AG04449 (cell line): ENCODE measurements at regions of chr14 and their contacts with region 1.

Region 1: GRCh38 chr14:103679351-103679750 is 35.9 kb downstream of the XRCC3 start:
- DNase-seq: no peak
- H3K4me3 ChIP-seq: no peak overlapping the region
- CTCF ChIP-seq: peak; percentile 49

Region 2: DNA sequence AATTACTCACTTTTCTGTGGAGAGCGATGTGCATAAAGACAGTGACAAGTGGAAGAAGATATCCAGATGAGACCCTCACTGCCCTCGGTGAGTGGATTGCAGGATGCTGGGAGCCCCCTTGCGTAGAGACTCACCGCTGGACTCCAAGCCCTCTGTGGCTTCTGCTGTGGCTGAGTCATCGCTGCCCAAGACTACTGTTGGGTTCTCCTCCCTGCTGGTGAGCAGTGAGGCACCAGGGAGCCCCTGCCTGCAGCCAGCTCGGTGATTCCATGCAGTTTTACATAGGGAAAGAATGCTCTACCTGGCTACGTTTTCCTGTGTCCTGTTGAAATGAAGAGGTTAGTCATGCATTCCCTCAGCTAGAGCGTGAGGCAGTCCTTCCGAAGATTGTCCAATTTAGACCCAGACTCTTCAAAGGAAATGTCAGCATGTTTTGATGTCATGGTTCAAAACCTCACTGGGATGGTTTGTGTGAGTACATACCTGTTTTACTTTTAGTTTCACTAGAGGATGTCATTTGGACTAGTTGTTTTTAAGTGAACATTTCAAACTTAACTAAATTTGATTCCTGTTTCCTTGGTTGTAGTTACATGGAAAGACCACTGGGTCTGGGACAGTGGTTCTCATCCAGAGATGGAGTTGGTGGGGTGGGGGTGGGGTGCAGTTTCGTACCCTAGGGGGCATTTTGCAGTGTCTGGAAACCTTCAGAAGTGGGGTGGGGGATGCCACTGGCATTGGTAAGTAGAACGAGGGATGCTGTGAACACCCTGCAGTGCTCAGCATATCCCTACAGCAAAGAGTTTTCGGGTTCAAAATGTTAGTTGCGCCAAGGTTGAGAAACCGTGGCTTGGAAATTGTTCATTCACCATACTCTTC is 873.7 kb before region 1 on chr14:
- CTCF ChIA-PET with region 1: no interaction called
- POLR2A ChIA-PET with region 1: no interaction called
- DNase-seq: no peak
- H3K4me3 ChIP-seq: no peak overlapping the region
- CTCF ChIP-seq: no peak

Region 3: GRCh38 chr14:103528587-103529382 is 150.6 kb before region 1 on chr14 and contains the start of gene TRMT61A:
- CTCF ChIA-PET with region 1: no interaction called
- POLR2A ChIA-PET with region 1: no interaction called
- DNase-seq: no peak
- H3K4me3 ChIP-seq: peak within 1 kb of the TSS; percentile 93
- CTCF ChIP-seq: no peak

Region 4: GRCh38 chr14:103668117-103668516 is 11.2 kb before region 1 on chr14:
- CTCF ChIA-PET with region 1: interaction called, 13 read pairs
- POLR2A ChIA-PET with region 1: no interaction called
- DNase-seq: no peak
- H3K4me3 ChIP-seq: no peak overlapping the region
- CTCF ChIP-seq: no peak

Region 5: DNA sequence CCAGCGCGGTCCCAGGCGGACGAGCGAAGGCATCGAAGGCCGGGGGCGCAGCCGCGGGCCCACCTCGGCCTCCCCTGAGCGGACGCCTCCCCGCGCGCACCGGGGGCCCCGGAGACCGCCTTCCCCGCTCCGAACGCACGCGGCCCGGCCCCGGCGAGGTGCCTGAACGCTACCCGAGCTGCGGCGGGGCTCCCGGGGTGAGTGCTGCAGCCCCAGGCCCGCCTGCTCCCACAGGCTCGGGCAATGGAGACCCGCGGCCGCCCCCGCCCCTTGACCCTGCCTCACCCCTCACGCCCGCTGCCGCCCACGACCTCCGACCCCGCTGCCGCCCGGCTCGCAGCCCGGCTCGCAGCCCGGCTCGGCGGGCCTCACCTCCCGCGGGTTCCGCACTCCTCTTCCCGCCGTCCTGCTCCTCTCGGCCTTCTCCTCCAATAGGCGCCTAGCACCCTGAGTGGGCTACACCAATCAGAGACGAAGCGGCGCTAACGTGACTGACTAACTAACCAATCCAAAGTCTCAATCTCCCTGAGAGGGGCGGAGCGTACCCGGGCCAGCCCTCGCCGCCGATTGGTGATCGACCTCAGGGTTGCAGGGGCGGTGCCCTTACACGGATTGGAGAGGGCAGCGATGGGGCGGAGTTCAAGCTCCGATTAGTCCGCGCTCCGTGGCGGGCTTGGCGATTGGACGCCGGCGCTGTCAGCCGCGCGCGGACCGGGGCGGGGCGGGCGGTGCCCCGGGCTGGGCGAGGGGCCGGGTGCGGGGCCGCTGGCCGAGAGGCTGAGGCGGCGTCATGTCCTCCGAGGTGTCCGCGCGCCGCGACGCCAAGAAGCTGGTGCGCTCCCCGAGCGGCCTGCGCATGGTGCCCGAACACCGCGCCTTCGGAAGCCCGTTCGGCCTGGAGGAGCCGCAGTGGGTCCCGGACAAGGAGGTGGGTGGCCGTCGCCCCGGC is 36.0 kb after region 1 on chr14 and contains the starts of genes XRCC3 and ZFYVE21:
- CTCF ChIA-PET with region 1: no interaction called
- POLR2A ChIA-PET with region 1: no interaction called
- DNase-seq: peak; percentile 91
- H3K4me3 ChIP-seq: peak within 1 kb of the TSS; percentile 64
- CTCF ChIP-seq: no peak

Region 6: GRCh38 chr14:103819503-103820307 is 140.4 kb after region 1 on chr14:
- CTCF ChIA-PET with region 1: no interaction called
- POLR2A ChIA-PET with region 1: no interaction called
- DNase-seq: no peak
- H3K4me3 ChIP-seq: no peak overlapping the region
- CTCF ChIP-seq: no peak